ENCODE measurements at regions of chr20 and their contacts with region 1.

Region 1: GRCh38 chr20:16821211-16822089 is 73.3 kb downstream of the OTOR start:
- DNase-seq: peak; percentile 31
- ATAC-seq: peak; percentile 91
- H3K4me3 ChIP-seq: no peak overlapping the region
- H3K27ac ChIP-seq: no peak overlapping the region
- H3K4me1 ChIP-seq: no peaks in the 10 kb centered on the region
- H3K27me3 ChIP-seq: peaks cover 7% of the 10 kb centered on the region; the same call in 1 of the 2 replicates
- CTCF ChIP-seq: peak; percentile 43 to 97 (median 94); a peak in 5 of 6 replicates
- POLR2A ChIP-seq: no peak
- RAD21 ChIP-seq: peak; percentile 57

Region 2: DNA sequence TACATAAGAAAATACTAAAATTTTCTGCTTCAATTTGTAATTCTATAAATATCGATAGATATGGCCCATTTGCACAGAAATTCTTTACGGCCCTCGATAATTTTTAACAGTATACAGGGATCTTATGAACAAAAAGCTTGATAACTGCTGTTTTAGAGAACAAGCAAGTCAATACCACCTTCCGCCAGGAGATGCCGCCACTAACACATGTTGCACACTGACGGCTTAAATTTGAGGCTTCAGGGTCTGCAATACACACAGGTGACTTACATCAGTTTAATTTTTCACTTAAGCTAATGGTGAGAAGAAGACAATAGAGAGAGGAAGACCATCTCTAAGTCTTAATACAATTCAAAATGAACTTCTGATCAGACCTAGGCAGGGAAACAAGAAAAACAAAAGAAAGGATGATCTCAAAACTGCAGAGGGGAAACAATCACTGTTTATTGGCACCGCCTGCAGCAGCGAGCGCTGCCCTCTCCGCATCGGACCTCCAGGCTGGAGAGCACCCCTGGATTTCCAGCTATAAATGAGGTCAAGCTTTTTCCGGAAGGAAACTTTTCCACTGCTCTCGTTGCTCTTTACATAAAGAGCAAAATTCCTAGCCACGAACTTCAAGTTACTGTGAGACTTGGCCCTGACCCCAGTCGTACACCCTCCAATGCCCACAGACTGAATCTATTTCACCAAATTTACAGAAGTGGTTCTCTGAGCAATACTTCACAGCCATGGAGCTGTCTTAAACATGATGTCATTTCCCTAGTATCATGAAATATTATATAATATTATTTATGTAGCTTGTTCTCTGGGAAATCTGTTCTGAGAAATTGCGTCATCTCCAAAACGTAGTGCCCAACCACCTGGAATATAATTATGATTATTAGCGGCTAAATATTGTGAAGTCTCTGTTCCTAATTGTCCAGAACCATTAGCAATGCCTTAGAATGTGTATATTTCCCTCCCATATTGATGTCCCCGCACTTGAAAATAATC is 19.2 kb before region 1 on chr20:
- CTCF ChIA-PET with region 1: interaction called, 56 read pairs
- POLR2A ChIA-PET with region 1: no interaction called
- RAD21 ChIA-PET with region 1: interaction called, 6 to 10 read pairs
- intact Hi-C with region 1: loop called (anchors 1 kb)
- DNase-seq: peak; percentile 56
- ATAC-seq: peak; percentile 78
- H3K4me3 ChIP-seq: no peak overlapping the region
- H3K27ac ChIP-seq: no peak overlapping the region
- H3K4me1 ChIP-seq: no peaks in the 10 kb centered on the region
- H3K27me3 ChIP-seq: peaks cover 38% of the 10 kb centered on the region
- CTCF ChIP-seq: peak; percentile 55 to 93 (median 86); a peak in 5 of 6 replicates
- POLR2A ChIP-seq: no peak
- RAD21 ChIP-seq: peak; percentile 75

Region 3: GRCh38 chr20:16810216-16810615 is 11.2 kb before region 1 on chr20:
- CTCF ChIA-PET with region 1: interaction called, 21 read pairs
- POLR2A ChIA-PET with region 1: interaction called, 3 read pairs
- RAD21 ChIA-PET with region 1: no interaction called
- intact Hi-C with region 1: no loop called
- DNase-seq: no peak
- ATAC-seq: no peak; the same call in 1 of the 2 replicates
- H3K4me3 ChIP-seq: no peak overlapping the region
- H3K27ac ChIP-seq: no peak overlapping the region
- H3K4me1 ChIP-seq: no peaks in the 10 kb centered on the region
- H3K27me3 ChIP-seq: peaks cover 45% of the 10 kb centered on the region; the same call in 1 of the 2 replicates
- CTCF ChIP-seq: no peak
- POLR2A ChIP-seq: no peak
- RAD21 ChIP-seq: no peak

Region 4: DNA sequence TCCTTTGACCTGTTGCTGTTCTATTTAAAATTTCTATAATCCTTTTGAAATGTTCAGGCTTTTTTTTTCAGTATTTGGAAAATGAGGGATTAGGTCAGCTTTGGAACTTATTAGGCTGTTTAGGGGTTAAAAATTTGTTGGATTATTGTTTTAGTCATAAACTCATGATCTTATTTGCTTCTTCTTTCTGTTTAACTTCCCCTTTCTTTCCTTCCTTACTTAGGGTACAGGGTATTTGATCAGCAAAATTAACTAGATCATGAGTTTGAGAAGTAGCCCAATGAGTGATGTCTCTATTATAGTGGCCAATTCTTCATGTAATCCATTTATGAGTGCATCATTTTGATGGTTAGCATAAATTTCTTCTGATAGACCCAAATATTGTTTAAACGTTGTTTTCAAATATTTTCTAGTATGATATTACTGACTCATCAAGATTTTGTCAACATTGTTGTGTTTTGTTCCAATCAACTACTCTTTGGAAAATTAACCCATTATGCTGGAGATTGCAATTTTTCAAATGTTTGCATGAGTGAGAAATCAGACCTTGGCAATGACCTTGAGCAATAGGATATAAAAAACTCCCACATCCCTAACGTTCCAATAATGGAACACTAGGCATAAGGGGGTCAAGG is 21.2 kb after region 1 on chr20:
- CTCF ChIA-PET with region 1: interaction called, 13 read pairs
- POLR2A ChIA-PET with region 1: no interaction called
- RAD21 ChIA-PET with region 1: no interaction called
- intact Hi-C with region 1: no loop called
- DNase-seq: no peak
- ATAC-seq: no peak
- H3K4me3 ChIP-seq: no peak overlapping the region
- H3K27ac ChIP-seq: no peak overlapping the region
- H3K4me1 ChIP-seq: no peaks in the 10 kb centered on the region
- H3K27me3 ChIP-seq: peaks cover 20% of the 10 kb centered on the region
- CTCF ChIP-seq: no peak
- POLR2A ChIP-seq: no peak
- RAD21 ChIP-seq: no peak

Region 5: GRCh38 chr20:17431621-17432364 is 610.3 kb after region 1 on chr20:
- CTCF ChIA-PET with region 1: interaction called, 10 read pairs
- POLR2A ChIA-PET with region 1: no interaction called
- RAD21 ChIA-PET with region 1: no interaction called
- intact Hi-C with region 1: no loop called
- DNase-seq: peak; percentile 19
- ATAC-seq: peak; percentile 80
- H3K4me3 ChIP-seq: no peak overlapping the region
- H3K27ac ChIP-seq: no peak overlapping the region
- H3K4me1 ChIP-seq: no peaks in the 10 kb centered on the region
- H3K27me3 ChIP-seq: peaks cover 17% of the 10 kb centered on the region
- CTCF ChIP-seq: peak; percentile 68 to 94 (median 86); a peak in 5 of 6 replicates
- POLR2A ChIP-seq: no peak
- RAD21 ChIP-seq: peak; percentile 74

Region 6: DNA sequence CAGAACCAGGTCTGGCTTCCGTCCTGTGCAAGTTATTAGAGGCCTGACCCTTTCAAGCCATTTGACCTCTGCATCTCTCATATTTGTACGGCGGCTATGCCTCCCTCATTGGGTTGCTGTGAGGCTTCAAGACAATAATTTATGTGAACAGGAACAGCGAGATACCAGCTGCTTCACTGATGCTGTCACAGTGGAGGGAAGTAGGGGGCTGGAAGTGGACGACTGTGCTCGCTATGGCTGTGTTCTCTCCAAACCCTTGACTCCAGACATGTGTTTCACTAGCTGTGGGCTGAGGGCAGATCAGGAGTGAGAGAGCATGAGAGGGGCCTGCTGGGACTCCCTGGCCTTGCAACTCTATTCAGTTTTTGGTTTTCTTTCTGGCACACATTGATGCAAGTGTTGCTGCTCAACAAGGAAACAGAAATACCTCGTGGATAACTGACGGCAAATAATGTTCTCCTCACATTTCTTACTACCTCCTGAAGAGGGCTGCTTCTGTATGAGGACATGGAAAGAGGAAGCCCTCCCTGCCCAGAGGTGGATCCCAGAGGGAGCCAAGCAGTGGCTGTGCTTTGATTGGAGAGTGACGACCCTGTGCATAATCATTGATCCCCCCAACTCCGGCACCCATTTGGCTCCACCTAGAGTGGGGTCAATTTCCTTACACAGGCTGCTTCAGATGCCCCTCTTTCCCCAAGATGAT is 1957.4 kb after region 1 on chr20:
- CTCF ChIA-PET with region 1: no interaction called
- POLR2A ChIA-PET with region 1: no interaction called
- RAD21 ChIA-PET with region 1: no interaction called
- intact Hi-C with region 1: no loop called
- DNase-seq: no peak
- ATAC-seq: no peak
- H3K4me3 ChIP-seq: no peak overlapping the region
- H3K27ac ChIP-seq: no peak overlapping the region
- H3K4me1 ChIP-seq: no peaks in the 10 kb centered on the region
- H3K27me3 ChIP-seq: 0 out of 2 replicates have a peak, but pooled peaks cover 10% of the 10 kb centered on the region
- CTCF ChIP-seq: no peak
- POLR2A ChIP-seq: no peak
- RAD21 ChIP-seq: no peak

Measured in HCT116 (cell line).